HEK293T (cell line): ENCODE measurements at regions of chr3 and their contacts with region 1.

Region 1: GRCh38 chr3:77038468-77038929 is 1.4 kb upstream of the ROBO2 start:
- DNase-seq: peak; percentile 66

Region 2: GRCh38 chr3:77014226-77014625 is 24.3 kb before region 1 on chr3:
- CTCF ChIA-PET with region 1: no interaction called
- POLR2A ChIA-PET with region 1: no interaction called
- DNase-seq: no peak

Region 3: DNA sequence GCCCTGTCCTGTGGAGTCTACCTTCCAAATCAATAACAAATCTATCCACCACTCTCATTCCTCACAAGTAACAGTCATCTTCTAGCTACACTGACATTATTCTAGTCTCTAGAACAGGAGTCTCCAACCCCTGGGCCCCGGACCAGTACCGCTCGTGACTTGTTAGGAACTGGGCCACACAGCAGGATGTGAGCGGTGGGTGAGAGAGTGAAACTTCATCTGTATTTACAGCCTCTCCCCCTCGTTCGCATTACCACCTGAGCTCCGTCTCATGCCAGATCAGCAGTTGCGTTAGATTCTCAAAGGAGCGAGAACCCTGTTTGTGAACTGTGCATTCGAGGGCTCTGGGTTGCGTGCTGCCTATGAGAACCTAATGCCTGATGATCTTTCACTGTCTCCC is 33.3 kb after region 1 on chr3:
- CTCF ChIA-PET with region 1: no interaction called
- POLR2A ChIA-PET with region 1: no interaction called
- DNase-seq: no peak

Region 4: DNA sequence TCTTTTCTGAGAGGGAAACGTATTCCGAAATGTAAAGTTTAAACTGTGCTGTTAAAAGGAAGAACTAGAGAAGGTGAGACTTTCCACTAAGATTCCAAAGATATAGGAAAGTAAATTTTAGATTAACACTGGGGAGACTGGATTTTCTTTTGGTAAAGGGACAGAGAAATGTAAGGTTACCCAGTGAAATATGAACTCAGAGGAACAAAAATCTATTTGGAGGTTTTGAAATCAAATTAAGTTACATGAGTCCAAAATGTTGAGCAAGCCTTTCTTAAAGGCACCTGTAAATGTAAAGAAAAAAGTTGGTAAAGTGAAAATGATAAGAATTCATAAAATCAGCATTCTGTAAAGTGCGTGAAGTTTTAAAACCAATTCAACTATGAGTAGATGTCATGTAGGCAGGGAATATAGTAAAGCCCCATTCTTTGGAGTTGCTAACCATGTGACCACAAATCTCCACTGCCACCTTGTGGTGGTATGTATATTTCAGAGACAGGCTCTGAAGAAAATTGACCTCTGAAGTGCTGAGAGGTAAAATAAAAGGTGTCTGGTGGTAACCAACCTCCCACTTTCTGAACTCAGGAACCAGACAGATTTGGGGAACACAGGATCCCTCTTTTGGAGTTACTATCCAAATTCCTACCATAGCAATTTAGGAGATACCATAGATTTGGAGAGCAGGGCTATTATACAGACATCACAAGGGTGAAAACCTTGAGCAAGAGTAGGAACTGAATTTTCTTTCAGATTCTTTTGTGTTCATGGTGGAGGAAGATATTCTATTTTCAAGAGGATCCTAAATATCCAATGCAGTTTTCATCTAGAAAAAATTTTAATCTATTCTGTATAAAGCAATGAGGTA is 216.7 kb after region 1 on chr3:
- CTCF ChIA-PET with region 1: interaction called, 12 read pairs
- POLR2A ChIA-PET with region 1: interaction called, 16 read pairs
- DNase-seq: peak; percentile 58

Region 5: GRCh38 chr3:77267589-77267988 is 229.1 kb after region 1 on chr3:
- CTCF ChIA-PET with region 1: no interaction called
- POLR2A ChIA-PET with region 1: no interaction called
- DNase-seq: no peak

Region 6: DNA sequence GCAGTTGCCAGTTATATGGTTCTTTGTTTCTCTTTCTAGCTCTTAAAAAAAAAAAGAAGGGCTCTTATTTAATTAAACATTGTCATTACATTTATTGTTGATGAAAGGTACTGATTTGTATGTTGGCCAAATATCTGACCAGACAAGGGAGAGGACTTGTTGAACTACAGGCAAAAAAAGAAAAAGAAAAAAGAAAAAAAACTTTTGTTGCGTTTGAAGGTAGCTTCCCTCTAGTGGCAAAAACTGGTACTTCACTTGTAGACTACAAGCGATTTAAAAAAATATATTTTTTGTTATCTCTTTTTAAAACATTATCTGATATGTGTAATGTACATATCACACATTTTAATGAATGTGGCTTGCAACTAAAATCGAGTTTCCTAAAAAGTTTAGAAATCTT is 282.0 kb after region 1 on chr3:
- CTCF ChIA-PET with region 1: interaction called, 21 read pairs
- POLR2A ChIA-PET with region 1: no interaction called
- DNase-seq: no peak